GM12878 (cell line): ENCODE measurements at regions of chr3 and their contacts with region 1.

Region 1: GRCh38 chr3:193665370-193665989 is 72.5 kb downstream of the OPA1 start:
- DNase-seq: no peak
- ATAC-seq: no peak
- H3K4me3 ChIP-seq: no peak overlapping the region
- H3K27ac ChIP-seq: no peak overlapping the region
- H3K4me1 ChIP-seq: no peaks in the 10 kb centered on the region
- H3K27me3 ChIP-seq: no peaks in the 10 kb centered on the region
- CTCF ChIP-seq: peak in 2 of 3 experiments; percentile 10 to 19; a peak in 2 of 6 replicates
- EP300 ChIP-seq: no peak
- POLR2A ChIP-seq: no peak
- RAD21 ChIP-seq: 0 out of 2 replicates have a peak, but pooled peaks have one; percentile 35

Region 2: DNA sequence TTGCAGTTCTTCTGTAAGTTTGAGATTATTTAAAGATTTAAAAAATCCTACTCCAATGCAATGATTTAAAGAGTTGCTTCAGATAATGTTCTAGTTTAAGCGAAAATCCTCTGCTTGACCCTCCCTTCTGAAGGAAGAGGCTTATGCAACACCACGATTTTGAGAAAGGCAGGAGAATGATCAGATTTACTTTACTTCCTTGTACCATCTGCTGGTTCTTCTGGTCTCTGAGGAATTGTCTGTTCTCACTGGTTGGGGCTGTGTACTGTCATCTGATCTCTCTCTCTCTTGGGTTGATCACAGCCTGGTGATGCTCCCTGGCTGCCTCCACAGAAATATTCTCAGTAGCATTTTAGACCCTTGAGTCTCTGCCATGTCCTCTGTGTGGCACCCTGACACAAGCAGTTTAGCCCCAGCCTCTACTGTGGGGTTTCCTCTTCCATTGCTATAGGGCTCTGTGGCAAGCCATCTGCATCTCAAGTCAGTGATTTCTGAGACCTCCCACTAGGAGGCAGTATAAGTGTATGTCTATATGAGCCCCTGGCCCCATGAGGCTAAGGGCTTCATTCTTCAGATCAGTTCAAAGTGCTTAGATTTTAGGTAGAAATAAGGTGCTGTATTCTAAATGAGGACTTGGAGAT is 475.2 kb before region 1 on chr3:
- CTCF ChIA-PET with region 1: no interaction called
- POLR2A ChIA-PET with region 1: no interaction called
- RAD21 ChIA-PET with region 1: no interaction called
- SMC1A ChIA-PET with region 1: no interaction called
- in situ Hi-C with region 1: no loop called
- intact Hi-C with region 1: no loop called
- DNase-seq: no peak
- ATAC-seq: peak; percentile 76
- H3K4me3 ChIP-seq: no peak overlapping the region
- H3K27ac ChIP-seq: no peak overlapping the region
- H3K4me1 ChIP-seq: no peaks in the 10 kb centered on the region
- H3K27me3 ChIP-seq: no peaks in the 10 kb centered on the region
- CTCF ChIP-seq: peak; percentile 22 to 43 (median 32); a peak in 4 of 6 replicates
- EP300 ChIP-seq: no peak
- POLR2A ChIP-seq: no peak
- RAD21 ChIP-seq: peak; percentile 46

Region 3: DNA sequence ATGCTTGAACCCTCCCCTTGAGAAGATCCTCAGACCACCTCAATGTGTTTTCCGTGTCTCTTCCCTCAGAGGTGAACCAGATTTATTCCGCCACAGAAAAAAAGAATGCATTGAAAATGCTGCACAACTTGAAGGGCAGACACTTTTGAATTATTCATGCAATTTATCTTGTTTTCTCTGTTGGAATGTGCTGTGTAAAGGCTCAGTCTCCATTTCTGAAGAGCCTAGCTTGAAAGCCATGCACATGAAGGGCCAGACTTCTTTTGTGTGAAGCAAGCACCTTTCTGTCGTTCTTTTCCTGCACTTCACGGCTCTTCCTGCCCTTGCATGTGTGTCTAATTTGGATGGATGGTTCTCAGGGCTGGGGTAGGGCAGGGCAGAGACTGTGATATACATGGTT is 208.0 kb before region 1 on chr3:
- CTCF ChIA-PET with region 1: no interaction called
- POLR2A ChIA-PET with region 1: no interaction called
- RAD21 ChIA-PET with region 1: no interaction called
- SMC1A ChIA-PET with region 1: no interaction called
- in situ Hi-C with region 1: no loop called
- intact Hi-C with region 1: no loop called
- DNase-seq: no peak
- ATAC-seq: no peak
- H3K4me3 ChIP-seq: no peak overlapping the region
- H3K27ac ChIP-seq: no peak overlapping the region
- H3K4me1 ChIP-seq: no peaks in the 10 kb centered on the region
- H3K27me3 ChIP-seq: no peaks in the 10 kb centered on the region
- CTCF ChIP-seq: no peak
- EP300 ChIP-seq: no peak
- POLR2A ChIP-seq: no peak
- RAD21 ChIP-seq: no peak

Region 4: DNA sequence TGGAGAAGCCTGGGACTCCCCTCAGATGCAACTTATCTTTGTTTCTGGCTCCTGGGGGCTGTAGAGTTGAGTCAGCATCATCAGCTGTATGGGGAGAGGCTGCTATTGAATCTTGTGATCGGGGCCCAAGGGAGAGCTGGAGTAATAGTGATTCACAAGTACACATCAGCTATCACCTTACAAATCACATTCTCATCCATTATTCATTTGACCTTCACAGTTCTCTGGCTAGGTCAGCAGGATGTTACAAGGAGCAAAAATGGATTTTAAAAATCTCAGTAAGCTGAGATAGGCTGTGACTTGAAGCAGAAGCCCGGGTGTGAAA is 102.6 kb after region 1 on chr3:
- CTCF ChIA-PET with region 1: interaction called, 10 read pairs
- POLR2A ChIA-PET with region 1: no interaction called
- RAD21 ChIA-PET with region 1: interaction called, 4 read pairs
- SMC1A ChIA-PET with region 1: interaction called, 14 read pairs
- in situ Hi-C with region 1: no loop called
- intact Hi-C with region 1: loop called (anchors 5 kb)
- DNase-seq: no peak
- ATAC-seq: no peak
- H3K4me3 ChIP-seq: no peak overlapping the region
- H3K27ac ChIP-seq: no peak overlapping the region
- H3K4me1 ChIP-seq: no peaks in the 10 kb centered on the region
- H3K27me3 ChIP-seq: no peaks in the 10 kb centered on the region
- CTCF ChIP-seq: no peak
- EP300 ChIP-seq: no peak
- POLR2A ChIP-seq: no peak
- RAD21 ChIP-seq: no peak

Region 5: GRCh38 chr3:193780810-193781472 is 115.5 kb after region 1 on chr3:
- CTCF ChIA-PET with region 1: interaction called, 25 read pairs
- POLR2A ChIA-PET with region 1: no interaction called
- RAD21 ChIA-PET with region 1: interaction called, 3 read pairs
- SMC1A ChIA-PET with region 1: interaction called, 14 read pairs
- in situ Hi-C with region 1: no loop called
- intact Hi-C with region 1: no loop called
- DNase-seq: no peak
- ATAC-seq: peak; percentile 56
- H3K4me3 ChIP-seq: no peak overlapping the region
- H3K27ac ChIP-seq: no peak overlapping the region
- H3K4me1 ChIP-seq: no peaks in the 10 kb centered on the region
- H3K27me3 ChIP-seq: peaks cover 0 to 3% of the 10 kb centered on the region in 2 experiments; a peak in 2 of 4 replicates
- CTCF ChIP-seq: peak; percentile 47 to 62 (median 48); a peak in 5 of 6 replicates
- EP300 ChIP-seq: no peak
- POLR2A ChIP-seq: no peak
- RAD21 ChIP-seq: peak; percentile 85

Region 6: GRCh38 chr3:194315088-194315964 is 649.8 kb after region 1 on chr3:
- CTCF ChIA-PET with region 1: interaction called, 56 read pairs
- POLR2A ChIA-PET with region 1: no interaction called
- RAD21 ChIA-PET with region 1: interaction called, 35 read pairs
- SMC1A ChIA-PET with region 1: interaction called, 40 read pairs
- in situ Hi-C with region 1: loop called (anchors 5 kb)
- intact Hi-C with region 1: loop called (anchors 2 kb)
- DNase-seq: peak; percentile 38
- ATAC-seq: peak; percentile 95
- H3K4me3 ChIP-seq: peak overlapping the region; percentile 57
- H3K27ac ChIP-seq: no peak overlapping the region
- H3K4me1 ChIP-seq: peaks cover 6% of the 10 kb centered on the region
- H3K27me3 ChIP-seq: no peaks in the 10 kb centered on the region; a peak in 1 of 4 replicates
- CTCF ChIP-seq: peak; percentile 82 to 96 (median 92)
- EP300 ChIP-seq: no peak
- POLR2A ChIP-seq: no peak
- RAD21 ChIP-seq: peak; percentile 98